Head of caudate nucleus (tissue), 42 donors: ENCODE measurements at regions of chr12 and their contacts with region 1.

Region 1: GRCh38 chr12:132761032-132761920 is at the start of gene ANKLE2:
- DNase-seq: peak in 15 of 42 donors; percentile 20 to 56 (median 34)

Region 2: GRCh38 chr12:132610051-132610759 is 151.1 kb before region 1 on chr12 and contains the start of gene LRCOL1:
- intact Hi-C with region 1: no loop called
- DNase-seq: no peak

Region 3: GRCh38 chr12:132710422-132711168 is 50.7 kb before region 1 on chr12 and contains the start of gene PGAM5:
- intact Hi-C with region 1: loop called (anchors 5 kb)
- DNase-seq: peak; percentile 48 to 93 (median 84)

Region 4: GRCh38 chr12:132828706-132829534 is 67.6 kb after region 1 on chr12 and contains the start of gene GOLGA3:
- intact Hi-C with region 1: loop called (anchors 10 kb)
- DNase-seq: peak; percentile 89 to 98 (median 95)